Right ventricle myocardium inferior (tissue), 1 donor: ENCODE measurements at regions of chr5 and their contacts with region 1.

Region 1: GRCh38 chr5:142816531-142817430 is 46.6 kb downstream of the ARHGAP26 start:
- DNase-seq: no peak
- ATAC-seq: no peak

Region 2: DNA sequence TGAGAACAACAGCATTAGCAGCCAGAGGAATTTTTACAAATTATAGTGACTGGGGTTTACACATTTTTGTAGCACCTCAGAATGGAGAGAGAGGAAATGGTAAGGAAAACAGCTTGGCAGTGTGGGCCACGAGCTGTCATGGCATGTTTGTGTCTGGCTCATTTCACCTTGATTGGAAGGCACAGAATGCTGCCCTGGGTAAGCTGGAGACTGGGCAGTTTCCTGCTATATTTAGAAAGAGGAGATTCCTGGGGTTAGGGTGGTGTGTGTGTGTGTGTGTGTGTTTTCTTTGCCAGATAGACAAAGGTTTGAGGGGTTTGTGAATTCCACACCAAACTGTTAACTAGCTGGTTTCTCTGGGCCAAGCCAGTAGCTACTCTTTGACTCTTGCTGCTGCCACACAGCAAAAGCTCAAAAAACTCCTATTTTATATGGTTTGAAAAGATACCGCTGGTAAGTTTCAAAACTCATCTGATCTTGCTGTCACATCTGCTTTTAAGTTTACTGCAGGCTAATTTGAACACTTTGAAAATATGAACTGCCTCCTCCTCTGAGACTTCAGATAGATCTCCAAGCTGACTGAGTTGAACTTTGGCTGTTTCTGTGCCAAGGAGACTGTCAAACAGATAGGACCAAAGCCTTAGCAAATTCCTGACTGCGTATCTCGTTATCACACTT is 37.5 kb before region 1 on chr5:
- intact Hi-C with region 1: loop called (anchors 2 kb)
- DNase-seq: no peak
- ATAC-seq: peak; percentile 60

Region 3: DNA sequence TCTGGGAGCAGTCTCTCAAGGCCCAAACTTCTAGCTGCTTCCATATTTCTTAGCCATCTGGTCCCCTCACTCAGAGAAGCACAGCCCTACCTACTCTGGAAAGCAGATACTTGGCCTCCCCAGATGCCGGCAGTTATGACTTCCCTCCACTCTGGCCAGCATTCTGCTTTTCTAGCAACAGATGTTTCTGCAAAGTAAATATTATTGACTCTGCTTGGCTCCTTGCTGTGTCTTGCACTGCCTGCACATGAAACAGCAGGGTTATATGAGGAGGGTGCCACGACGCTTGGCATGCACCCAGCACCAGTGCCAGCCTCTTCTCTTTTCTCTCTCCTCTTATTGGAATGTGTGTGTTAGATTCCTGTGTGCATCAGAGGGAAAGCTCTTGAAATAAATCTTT is 53.1 kb after region 1 on chr5:
- intact Hi-C with region 1: loop called (anchors 10 kb)
- DNase-seq: no peak
- ATAC-seq: peak; percentile 23